Calu3 (cell line): ENCODE measurements at regions of chr13 and their contacts with region 1.

Region 1: GRCh38 chr13:44373601-44374348 is at the start of gene SERP2:
- DNase-seq: no peak
- H3K4me3 Mint-ChIP-seq: peak within 1 kb of the TSS; percentile 30
- H3K27ac Mint-ChIP-seq: peak within 1 kb of the TSS; percentile 43
- H3K4me1 Mint-ChIP-seq: peaks cover 23% of the 10 kb centered on the region
- H3K27me3 Mint-ChIP-seq: peaks cover 12% of the 10 kb centered on the region
- CTCF ChIP-seq: no peak
- total RNA-seq, gene SERP2: not detected in 2 replicates

Region 2: GRCh38 chr13:43878892-43879754 is 494.7 kb before region 1 on chr13 and contains the start of gene CCDC122:
- CTCF ChIA-PET with region 1: no interaction called
- intact Hi-C with region 1: no loop called
- DNase-seq: peak; percentile 79
- H3K4me3 Mint-ChIP-seq: peak within 1 kb of the TSS; percentile 96
- H3K27ac Mint-ChIP-seq: peak within 1 kb of the TSS; percentile 84
- H3K4me1 Mint-ChIP-seq: peaks cover 24% of the 10 kb centered on the region
- H3K27me3 Mint-ChIP-seq: no peaks in the 10 kb centered on the region
- CTCF ChIP-seq: no peak
- total RNA-seq, gene CCDC122: 6.1 and 6.2 TPM in 2 replicates

Region 3: DNA sequence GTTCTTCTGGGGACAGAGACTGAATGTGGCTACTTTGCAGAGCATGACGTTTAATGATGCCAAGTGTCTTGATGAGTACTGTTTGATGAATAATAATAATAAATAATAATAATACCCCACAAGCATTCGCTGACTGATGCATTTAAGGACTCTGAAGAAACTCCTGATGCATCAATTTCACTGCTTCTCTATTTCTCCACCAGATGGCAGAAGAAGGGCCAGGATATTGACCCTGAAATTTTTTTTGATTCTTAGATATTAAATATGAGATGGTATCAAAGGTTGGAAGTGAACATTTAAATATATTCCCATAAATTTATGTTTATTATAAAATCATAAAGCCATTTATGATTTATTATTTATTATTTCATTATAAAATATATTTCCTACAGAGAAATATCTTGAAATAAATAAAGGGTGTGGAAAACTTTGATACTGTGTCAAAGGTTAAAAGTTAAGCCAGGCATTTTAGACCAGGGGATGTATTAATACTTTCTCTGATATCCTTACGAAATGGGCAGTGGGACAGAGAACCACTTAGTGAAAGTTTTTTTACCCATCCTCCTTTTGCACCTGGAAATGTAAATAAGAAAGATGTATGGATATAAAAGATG is 323.2 kb before region 1 on chr13:
- CTCF ChIA-PET with region 1: no interaction called
- intact Hi-C with region 1: no loop called
- DNase-seq: peak; percentile 4
- H3K4me3 Mint-ChIP-seq: no peak overlapping the region
- H3K27ac Mint-ChIP-seq: no peak overlapping the region
- H3K4me1 Mint-ChIP-seq: peaks cover 6% of the 10 kb centered on the region
- H3K27me3 Mint-ChIP-seq: peaks cover 21% of the 10 kb centered on the region
- CTCF ChIP-seq: no peak

Region 4: DNA sequence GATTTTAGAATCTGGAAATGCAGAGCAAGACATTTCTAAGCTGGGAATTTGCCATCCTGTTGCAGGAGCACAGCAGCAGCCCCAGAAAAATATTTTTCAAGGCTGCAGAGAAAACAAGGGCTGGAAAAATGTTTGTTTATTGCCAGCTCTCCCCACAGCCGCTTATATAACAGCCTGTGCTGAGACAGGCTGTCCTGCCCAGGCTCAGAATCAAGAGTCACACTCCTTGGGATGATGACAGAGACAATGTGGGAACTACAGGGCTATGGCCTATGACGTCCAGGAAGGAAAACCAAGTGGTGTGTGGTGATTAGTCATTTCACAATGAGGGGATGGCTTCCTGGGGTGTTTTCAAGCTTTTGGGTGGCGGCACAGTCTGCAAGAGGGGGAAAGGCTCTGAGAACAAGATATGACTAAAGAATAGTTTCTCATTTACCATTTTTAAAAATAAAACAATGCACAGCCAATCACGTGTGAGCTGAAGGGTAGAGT is 136.5 kb before region 1 on chr13:
- CTCF ChIA-PET with region 1: no interaction called
- intact Hi-C with region 1: loop called (anchors 10 kb)
- DNase-seq: no peak
- H3K4me3 Mint-ChIP-seq: no peak overlapping the region
- H3K27ac Mint-ChIP-seq: no peak overlapping the region
- H3K4me1 Mint-ChIP-seq: peaks cover 7% of the 10 kb centered on the region
- H3K27me3 Mint-ChIP-seq: no peaks in the 10 kb centered on the region
- CTCF ChIP-seq: no peak